ENCODE measurements at regions of chr11 and their contacts with region 1.

Region 1: DNA sequence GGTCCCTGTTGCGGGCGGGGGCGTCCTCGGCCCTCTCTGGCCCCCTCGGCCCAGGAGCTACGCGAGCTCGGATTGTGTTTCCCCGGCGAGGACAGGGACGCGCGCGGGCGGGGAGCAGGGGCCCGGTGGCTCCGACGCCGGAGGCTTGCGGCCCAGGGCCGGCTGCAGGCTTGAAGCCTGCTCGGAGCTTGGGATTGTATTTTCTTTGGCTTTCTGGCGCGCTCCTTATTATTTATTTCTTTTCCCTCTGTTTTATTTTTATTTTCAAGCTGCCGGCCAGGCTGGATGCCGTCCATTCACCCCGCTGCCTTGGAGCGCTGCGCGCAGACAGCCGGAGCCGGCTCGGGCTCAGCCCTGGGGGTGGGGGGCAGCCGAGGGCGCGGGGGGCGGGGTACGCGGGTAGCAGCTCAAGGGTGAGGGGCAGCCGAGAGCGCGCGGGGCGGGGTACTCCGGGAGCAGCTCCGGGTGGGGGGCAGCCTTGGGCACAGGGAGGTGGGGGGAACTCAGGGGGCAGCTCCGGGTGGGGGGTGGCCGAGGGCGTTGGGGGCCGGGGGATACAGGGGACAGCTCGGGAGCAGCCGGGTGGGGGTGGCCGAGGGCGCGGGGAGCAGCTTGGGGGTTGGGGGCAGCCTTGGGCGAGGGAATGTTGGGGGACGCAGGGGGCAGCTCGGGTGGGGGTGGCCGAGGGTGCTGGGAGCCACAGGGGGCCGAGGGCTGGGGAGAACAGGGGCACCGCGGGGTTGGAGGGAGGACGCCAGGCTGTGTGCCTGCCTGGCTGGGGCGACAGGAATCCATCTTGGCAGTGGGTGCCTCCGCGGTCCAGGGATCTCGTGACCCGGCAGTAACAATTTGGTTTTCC is 42.7 kb downstream of the KCNJ1 start:
- DNase-seq: no peak
- ATAC-seq: no peak
- H3K4me3 ChIP-seq: peak overlapping the region; percentile 34
- H3K27ac ChIP-seq: no peak overlapping the region
- H3K4me1 ChIP-seq: no peaks in the 10 kb centered on the region
- H3K27me3 ChIP-seq: peaks cover 0 to 7% (median 0%) of the 10 kb centered on the region in 3 donors
- CTCF ChIP-seq: no peak

Region 2: GRCh38 chr11:128772814-128773213 is 51.6 kb before region 1 on chr11:
- intact Hi-C with region 1: loop called in 1 of 2 experiments (anchors 5 kb)
- DNase-seq: peak; percentile 39 to 72
- ATAC-seq: no peak
- H3K4me3 ChIP-seq: no peak overlapping the region
- H3K27ac ChIP-seq: no peak overlapping the region
- H3K4me1 ChIP-seq: peaks cover 9% of the 10 kb centered on the region
- H3K27me3 ChIP-seq: no peaks in the 10 kb centered on the region
- CTCF ChIP-seq: no peak

Measured in psoas muscle (tissue), 8 donors.